PC-9 (cell line): ENCODE measurements at regions of chr22 and their contacts with region 1.

Region 1: DNA sequence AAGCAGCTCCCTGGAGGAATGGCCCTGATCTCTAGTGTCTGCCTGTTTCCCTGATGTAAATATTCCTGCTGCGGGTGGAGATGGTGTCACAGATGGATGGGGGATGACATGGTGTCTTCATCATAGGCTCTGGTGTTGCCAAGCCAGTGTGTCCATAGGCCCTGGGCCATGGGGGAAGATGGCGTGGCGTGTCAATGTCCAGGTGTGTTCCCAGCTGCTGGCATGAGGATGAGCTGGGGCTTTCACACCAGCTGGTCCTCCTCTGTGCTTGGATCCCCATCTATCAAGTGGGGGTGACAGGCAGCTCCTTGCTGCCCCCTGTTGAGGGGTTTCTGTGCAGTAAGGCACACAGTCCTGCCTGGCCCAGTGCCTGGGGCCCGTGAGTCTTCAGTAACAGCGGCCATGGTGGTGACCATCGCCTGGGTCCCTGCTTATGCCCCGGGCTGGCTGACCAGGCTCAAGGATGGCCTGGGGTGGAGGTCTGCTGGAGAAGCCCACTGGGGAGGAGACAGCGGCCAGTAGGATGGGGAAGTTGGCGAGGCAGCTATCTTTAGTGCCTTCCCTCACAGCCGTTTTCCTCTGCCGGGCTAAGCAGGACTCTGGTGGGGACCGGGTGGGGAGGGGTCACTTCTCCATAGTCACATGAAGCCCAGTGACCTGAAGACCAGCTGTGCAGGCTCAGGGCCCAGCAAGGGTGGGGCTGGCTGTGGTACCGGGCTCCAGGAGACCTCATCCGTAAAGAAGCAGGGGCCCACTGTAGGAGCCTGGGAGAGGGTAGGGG is 12.7 kb downstream of the RPL3 start:
- DNase-seq: peak in 1 of 2 experiments; percentile 65
- H3K4me3 ChIP-seq: no peak overlapping the region
- H3K27ac ChIP-seq: no peak overlapping the region
- H3K4me1 ChIP-seq: peaks cover 48% of the 10 kb centered on the region
- H3K27me3 ChIP-seq: no peaks in the 10 kb centered on the region
- CTCF ChIP-seq: peak; percentile 65

Region 2: GRCh38 chr22:39170825-39171622 is 135.7 kb before region 1 on chr22:
- CTCF ChIA-PET with region 1: interaction called, 5 read pairs
- POLR2A ChIA-PET with region 1: interaction called, 4 read pairs
- intact Hi-C with region 1: loop called (anchors 1 kb)
- DNase-seq: peak; percentile 53 to 91
- H3K4me3 ChIP-seq: no peak overlapping the region
- H3K27ac ChIP-seq: no peak overlapping the region
- H3K4me1 ChIP-seq: peaks cover 50% of the 10 kb centered on the region
- H3K27me3 ChIP-seq: no peaks in the 10 kb centered on the region
- CTCF ChIP-seq: peak; percentile 100

Region 3: DNA sequence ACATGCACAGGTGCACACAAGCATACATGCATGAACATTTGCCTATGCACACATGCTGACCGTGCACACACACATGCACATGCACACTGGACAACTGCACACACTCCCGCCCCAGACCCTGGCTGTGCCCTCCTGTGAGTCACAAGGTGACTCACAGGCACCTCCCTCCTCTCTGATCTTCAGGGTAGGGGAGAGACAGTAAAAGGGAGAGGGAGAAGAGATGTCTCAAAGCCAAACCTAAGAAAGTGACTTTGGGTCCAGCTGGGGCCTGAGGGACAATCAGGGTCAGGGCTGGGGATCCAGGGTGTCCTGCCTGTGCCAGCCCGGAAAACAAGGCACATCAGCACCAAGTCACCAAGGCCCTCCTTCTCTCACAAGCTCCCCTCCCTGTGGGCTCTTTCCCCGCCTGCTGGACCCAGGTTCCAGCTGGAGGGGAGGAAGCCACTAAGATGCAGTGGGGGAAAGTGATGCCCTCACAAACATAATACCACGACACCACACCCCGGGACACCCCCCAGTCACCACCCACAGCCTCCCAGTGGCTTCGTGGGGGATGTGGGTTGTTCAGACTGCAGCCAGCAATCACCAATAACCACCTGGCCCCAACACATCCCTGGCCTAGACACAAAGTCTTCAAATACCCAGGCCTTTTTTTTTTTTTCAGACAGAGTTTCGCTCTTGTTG is 101.3 kb before region 1 on chr22:
- CTCF ChIA-PET with region 1: interaction called, 4 read pairs
- POLR2A ChIA-PET with region 1: interaction called, 13 read pairs
- intact Hi-C with region 1: no loop called
- DNase-seq: peak; percentile 71 to 86
- H3K4me3 ChIP-seq: no peak overlapping the region
- H3K27ac ChIP-seq: peak overlapping the region; percentile 54
- H3K4me1 ChIP-seq: peaks cover 42% of the 10 kb centered on the region
- H3K27me3 ChIP-seq: no peaks in the 10 kb centered on the region
- CTCF ChIP-seq: no peak

Region 4: DNA sequence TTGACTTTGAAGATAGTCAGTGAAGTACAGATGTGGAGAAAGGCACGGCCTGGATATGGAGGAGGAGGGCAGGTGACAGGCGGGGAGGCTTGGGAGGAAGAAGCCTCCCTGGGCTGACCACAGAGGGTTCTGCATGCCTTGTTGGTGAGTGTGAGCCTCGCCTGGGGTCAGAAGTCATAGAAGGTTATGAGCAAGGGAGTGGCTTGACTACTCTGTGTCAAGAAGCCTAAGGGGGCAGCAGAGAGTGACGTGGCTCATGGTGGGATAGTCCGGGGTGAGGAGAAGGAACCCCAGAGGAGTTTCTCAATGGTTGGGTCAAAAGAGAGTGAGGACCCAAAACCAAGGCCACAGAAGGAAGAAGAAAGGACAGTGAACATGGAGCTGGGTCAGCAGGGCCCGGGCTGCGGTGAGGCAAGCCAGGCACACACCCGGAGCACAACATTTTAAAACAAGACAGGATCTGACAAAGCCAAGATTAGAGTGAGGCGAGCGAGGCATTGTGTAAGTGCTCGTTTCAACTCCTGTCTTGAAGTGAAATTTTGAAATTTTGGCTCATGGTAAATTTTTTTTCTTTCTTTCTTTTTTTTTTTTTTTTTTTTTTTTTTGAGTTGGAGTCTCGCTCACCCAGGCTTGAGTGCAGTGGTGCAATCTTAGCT is 93.9 kb before region 1 on chr22:
- CTCF ChIA-PET with region 1: interaction called, 8 read pairs
- POLR2A ChIA-PET with region 1: interaction called, 3 read pairs
- intact Hi-C with region 1: loop called (anchors 1 kb)
- DNase-seq: peak; percentile 93 to 99
- H3K4me3 ChIP-seq: peak overlapping the region; percentile 41; the same call in 1 of the 2 replicates
- H3K27ac ChIP-seq: peak overlapping the region; percentile 87
- H3K4me1 ChIP-seq: peaks cover 55% of the 10 kb centered on the region
- H3K27me3 ChIP-seq: no peaks in the 10 kb centered on the region
- CTCF ChIP-seq: peak; percentile 61; the same call in 1 of the 2 replicates

Region 5: DNA sequence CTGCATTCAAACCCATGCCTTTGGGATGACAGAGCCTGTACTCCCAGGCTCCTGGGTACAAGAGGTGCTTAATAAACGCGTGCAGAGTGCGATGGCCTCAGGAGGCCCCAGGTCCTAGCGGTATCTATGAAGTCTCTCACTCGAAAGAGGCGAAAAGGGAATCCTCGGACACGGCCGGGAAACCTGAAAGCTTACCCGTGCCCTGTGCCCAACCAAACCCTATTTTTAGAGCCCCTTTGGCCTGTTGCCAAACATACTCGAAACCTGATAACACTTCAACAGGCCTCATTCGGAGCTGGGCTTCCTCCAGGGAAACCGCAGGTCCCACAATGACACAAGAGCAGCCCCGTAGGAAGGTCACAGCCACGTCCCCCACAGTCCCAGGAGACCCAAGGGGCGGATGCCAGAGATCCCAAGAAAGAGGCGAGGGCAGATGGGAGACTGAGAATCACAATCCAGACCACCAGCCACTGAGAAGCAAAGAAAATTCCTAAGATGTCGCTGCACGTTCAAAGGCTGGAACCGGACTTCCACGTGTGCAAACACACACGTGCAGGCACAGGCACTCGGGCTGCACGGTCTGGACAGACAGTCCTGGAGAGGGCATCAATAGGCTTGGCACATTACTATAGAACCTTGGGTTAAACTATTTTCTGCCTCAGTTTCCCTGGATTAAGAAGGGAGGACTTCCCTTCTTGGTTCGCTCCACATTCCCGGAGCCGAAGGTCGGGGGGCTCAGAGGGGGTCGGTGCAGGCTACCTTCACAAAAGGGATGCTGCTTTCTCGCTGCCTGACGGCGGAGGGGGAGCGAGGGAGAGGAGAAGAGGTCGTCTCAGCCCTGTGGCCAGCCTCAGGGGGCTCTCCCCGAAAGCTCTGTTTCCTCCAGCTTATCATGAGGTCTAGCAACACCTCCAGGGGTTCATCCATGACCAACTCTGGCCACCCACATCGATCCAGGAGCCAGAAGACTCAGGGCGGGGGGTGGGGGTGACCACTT is 70.2 kb before region 1 on chr22:
- CTCF ChIA-PET with region 1: interaction called, 5 read pairs
- POLR2A ChIA-PET with region 1: no interaction called
- intact Hi-C with region 1: loop called (anchors 1 kb)
- DNase-seq: no peak
- H3K4me3 ChIP-seq: no peak overlapping the region
- H3K27ac ChIP-seq: no peak overlapping the region
- H3K4me1 ChIP-seq: peaks cover 49% of the 10 kb centered on the region
- H3K27me3 ChIP-seq: no peaks in the 10 kb centered on the region
- CTCF ChIP-seq: no peak

Region 6: DNA sequence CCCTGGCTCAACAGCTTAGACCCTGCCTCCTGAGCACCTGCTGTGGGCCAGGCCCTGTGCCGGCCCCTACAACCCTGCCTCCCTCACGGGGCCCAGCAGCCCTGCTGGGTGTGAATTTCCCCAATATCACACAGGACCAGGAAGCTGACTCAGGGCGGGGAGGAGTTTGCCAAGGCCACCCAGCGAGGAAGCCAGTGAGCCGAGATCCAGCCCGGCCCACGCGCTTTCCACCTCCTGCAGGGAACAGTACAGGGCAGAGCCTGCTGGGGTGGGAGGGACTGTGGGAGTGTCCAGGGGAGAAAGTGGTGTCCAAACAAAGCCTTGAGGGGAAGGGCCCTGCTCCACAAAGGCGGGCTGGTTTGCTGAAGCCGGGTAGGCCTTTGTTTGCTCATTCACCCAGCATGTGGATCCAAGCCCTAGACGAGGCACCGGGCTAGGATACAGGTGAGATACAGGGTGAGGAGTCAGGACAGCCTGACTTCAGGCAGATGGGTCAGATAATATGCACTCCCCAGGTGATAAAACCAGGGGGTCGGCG is 14.1 kb before region 1 on chr22:
- CTCF ChIA-PET with region 1: interaction called, 13 read pairs
- POLR2A ChIA-PET with region 1: interaction called, 4 read pairs
- intact Hi-C with region 1: no loop called
- DNase-seq: peak; percentile 96 to 97
- H3K4me3 ChIP-seq: no peak overlapping the region
- H3K27ac ChIP-seq: peak overlapping the region; percentile 84
- H3K4me1 ChIP-seq: peaks cover 76% of the 10 kb centered on the region
- H3K27me3 ChIP-seq: no peaks in the 10 kb centered on the region
- CTCF ChIP-seq: no peak

Region 7: GRCh38 chr22:39332441-39333064 is 25.8 kb after region 1 on chr22:
- CTCF ChIA-PET with region 1: no interaction called
- POLR2A ChIA-PET with region 1: no interaction called
- intact Hi-C with region 1: no loop called
- DNase-seq: no peak
- H3K4me3 ChIP-seq: no peak overlapping the region
- H3K27ac ChIP-seq: no peak overlapping the region
- H3K4me1 ChIP-seq: no peaks in the 10 kb centered on the region
- H3K27me3 ChIP-seq: no peaks in the 10 kb centered on the region
- CTCF ChIP-seq: no peak

Region 8: GRCh38 chr22:40509401-40510134 is 1202.8 kb after region 1 on chr22:
- CTCF ChIA-PET with region 1: no interaction called
- POLR2A ChIA-PET with region 1: interaction called, 16 read pairs
- intact Hi-C with region 1: no loop called
- DNase-seq: peak; percentile 45 to 87
- H3K4me3 ChIP-seq: peak overlapping the region; percentile 33; the same call in 1 of the 2 replicates
- H3K27ac ChIP-seq: peak overlapping the region; percentile 94
- H3K4me1 ChIP-seq: peaks cover 78% of the 10 kb centered on the region
- H3K27me3 ChIP-seq: no peaks in the 10 kb centered on the region
- CTCF ChIP-seq: no peak